ENCODE measurements at regions of chr6 and their contacts with region 1.

Region 1: DNA sequence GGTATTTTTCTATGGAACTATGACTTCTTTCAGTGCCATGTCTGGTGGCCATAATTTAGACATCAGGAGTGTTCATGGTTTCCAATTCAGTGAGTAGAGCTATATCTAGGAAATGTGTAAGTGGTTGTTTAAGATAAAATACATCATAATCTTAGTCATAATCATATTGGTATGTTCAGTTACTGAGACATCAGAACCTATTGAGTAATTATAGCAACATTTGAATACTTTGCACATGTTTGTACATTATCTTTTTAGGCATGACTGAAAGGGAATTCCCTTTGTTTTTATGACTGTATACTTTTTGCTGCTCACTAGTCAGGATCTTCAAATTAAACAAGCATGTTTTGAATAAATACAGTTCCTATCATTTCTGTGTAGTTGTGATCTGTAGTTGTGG is 64.0 kb downstream of the STXBP5 start:
- DNase-seq: no peak
- ATAC-seq: no peak
- H3K4me3 ChIP-seq: no peak overlapping the region
- H3K27ac ChIP-seq: no peak overlapping the region
- H3K4me1 ChIP-seq: peaks cover 34% of the 10 kb centered on the region
- H3K27me3 ChIP-seq: no peaks in the 10 kb centered on the region
- CTCF ChIP-seq: no peak

Region 2: DNA sequence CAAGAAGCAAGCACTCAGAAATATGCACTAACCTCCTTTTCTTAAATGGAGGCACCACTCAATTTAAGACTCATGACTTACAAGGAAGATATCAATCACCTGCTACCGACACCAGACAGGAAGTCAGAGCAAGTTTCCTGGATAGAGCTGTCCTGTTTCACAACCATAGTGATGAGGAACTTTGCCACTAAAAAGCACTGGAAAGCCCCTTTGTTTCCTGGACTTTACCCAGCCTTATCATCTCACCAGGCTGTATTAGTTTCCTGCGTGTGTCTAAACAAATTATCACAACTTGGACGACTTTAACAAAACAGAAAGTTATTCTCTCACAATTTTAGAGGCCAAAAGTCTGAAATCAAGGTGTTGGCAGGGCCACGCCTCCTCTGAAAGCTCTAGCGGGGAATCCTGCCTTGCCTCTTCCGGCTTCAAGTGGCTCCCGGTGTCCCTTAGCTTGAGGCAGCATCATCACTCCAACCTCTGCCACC is 317.9 kb before region 1 on chr6:
- intact Hi-C with region 1: no loop called
- DNase-seq: no peak
- ATAC-seq: no peak
- H3K4me3 ChIP-seq: no peak overlapping the region
- H3K27ac ChIP-seq: no peak overlapping the region
- H3K4me1 ChIP-seq: no peaks in the 10 kb centered on the region
- H3K27me3 ChIP-seq: no peaks in the 10 kb centered on the region
- CTCF ChIP-seq: no peak

Region 3: GRCh38 chr6:147216915-147217314 is 51.3 kb before region 1 on chr6:
- intact Hi-C with region 1: loop called in 1 of 2 experiments (anchors 10 kb)
- DNase-seq: no peak
- ATAC-seq: no peak
- H3K4me3 ChIP-seq: no peak overlapping the region
- H3K27ac ChIP-seq: no peak overlapping the region
- H3K4me1 ChIP-seq: peaks cover 20% of the 10 kb centered on the region
- H3K27me3 ChIP-seq: no peaks in the 10 kb centered on the region
- CTCF ChIP-seq: no peak

Measured in psoas muscle (tissue), 8 donors.